ENCODE measurements at regions of chr2 and their contacts with region 1.

Region 1: DNA sequence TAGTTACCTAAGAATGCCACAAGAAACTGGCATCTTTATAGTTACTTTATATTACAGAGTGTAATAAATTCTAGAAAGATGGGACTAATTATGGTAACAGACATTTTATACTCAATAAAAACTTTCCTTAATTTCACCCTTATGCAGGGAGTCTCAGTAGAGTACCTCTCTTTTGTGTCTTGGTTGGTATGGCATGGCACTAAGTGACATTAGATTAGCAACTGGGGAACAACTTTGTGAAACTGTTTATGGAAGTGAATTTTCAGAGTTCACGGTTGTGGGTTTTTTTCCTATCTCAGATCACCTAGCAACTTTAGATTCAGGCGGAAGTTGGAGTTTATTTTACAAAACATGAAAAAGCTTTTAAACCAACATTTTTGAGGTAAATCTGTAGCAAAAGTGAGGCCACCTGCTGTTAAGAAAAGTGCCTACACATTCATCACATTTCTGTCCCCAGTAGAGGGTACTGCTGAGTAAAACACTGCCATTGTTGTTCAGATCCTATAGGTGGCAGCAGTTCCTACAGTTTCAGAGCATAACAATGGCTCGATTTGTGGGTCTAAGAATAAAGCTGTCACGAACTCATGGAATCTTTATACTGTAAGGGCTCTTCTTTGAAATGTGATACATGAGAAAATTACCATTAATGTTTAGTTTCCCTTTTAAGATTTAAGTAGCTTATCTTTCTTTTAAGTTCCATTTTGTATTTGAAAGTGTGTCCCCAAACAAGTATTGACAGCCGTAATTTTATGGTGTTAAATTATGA is 117.6 kb downstream of the CAMKMT start:
- DNase-seq: peak; percentile 61
- H3K4me3 ChIP-seq: no peak overlapping the region
- CTCF ChIP-seq: peak; percentile 98

Region 2: DNA sequence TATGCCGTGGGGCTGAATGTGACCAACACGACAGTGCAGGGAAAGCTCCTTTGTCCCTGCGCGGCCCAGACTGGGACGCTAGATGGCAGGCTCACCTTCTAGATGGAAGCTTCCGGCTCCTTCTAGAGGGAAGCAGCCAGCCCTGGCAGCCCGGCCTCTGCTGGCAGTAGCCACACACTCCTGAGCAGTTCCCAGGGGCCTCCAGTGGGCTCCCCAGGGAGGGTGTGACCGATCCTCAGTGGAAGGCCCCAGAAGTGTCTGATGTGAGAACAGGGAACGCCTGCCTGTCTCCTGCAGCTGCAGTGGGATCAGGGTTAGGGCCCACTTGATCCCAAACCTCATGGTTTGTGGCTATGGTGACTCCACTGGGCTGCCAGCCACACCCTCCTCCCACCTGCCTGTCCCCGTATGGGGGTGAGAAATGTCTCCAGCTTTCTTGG is 435.0 kb before region 1 on chr2:
- CTCF ChIA-PET with region 1: interaction called, 82 read pairs
- POLR2A ChIA-PET with region 1: no interaction called
- DNase-seq: peak; percentile 12
- H3K4me3 ChIP-seq: no peak overlapping the region
- CTCF ChIP-seq: peak; percentile 93

Region 3: GRCh38 chr2:44456946-44457345 is 22.4 kb before region 1 on chr2:
- CTCF ChIA-PET with region 1: interaction called, 14 read pairs
- POLR2A ChIA-PET with region 1: no interaction called
- DNase-seq: no peak
- H3K4me3 ChIP-seq: no peak overlapping the region
- CTCF ChIP-seq: no peak

Region 4: DNA sequence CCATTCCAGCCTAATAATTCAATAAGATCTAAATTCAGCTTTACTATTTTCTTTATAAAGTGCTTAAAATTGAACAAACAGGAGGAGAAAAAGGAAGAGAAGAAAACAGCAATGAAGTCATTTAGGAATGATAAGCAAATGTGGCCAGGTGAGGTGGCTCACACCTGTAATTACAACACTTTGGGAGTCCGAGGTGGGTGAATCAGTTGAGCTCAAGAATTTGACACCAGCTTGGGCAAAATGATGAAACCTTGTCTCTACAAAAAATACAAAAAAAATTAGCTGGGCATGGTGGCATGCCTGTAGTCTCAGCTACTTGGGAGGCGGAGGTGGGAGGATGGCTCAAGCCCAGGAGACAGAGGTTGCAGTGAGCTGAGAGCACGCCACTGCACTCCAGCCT is 11.4 kb after region 1 on chr2:
- CTCF ChIA-PET with region 1: interaction called, 75 read pairs
- POLR2A ChIA-PET with region 1: no interaction called
- DNase-seq: no peak
- H3K4me3 ChIP-seq: no peak overlapping the region
- CTCF ChIP-seq: no peak

Region 5: GRCh38 chr2:44515416-44515815 is 36.1 kb after region 1 on chr2:
- CTCF ChIA-PET with region 1: interaction called, 11 read pairs
- POLR2A ChIA-PET with region 1: no interaction called
- DNase-seq: no peak
- H3K4me3 ChIP-seq: no peak overlapping the region
- CTCF ChIP-seq: no peak

Region 6: DNA sequence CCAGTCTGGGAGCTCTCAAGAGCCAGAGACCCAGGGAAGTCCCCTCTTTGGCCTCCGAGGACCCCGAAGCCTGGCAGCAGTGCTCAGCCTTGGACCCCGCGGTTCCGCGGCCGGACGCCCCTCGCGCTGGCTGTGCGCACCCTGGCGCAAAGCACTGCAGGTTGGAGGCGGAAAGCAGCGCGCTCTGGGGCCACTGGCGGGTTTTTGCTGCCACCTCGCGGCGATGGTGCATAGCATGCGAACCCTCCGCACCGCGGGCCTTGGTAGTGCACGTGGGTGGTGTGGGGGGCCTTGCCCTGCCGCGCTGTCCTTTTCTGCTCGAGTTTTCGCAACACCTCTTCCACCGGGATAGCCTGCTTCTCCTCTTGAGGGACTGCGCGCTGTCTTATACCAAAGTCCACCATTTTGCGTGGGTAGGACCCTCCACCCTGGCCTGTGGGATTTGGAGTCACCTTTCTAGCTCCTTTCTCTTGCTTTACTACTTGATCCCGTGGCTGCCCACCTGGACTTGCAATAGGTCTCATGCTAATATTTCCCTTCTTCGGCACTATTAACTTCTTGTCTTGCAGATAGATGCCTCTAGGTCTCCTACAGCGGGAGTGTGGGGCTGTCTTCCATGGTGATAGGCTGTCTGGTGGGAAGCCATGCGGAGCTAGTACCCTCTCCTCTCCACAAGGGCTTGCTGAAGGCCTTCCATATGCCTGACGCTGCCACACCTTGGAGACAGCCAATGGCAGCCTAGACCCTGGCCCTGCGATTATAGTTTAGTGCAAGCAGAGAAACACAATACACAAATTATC is 476.5 kb after region 1 on chr2:
- CTCF ChIA-PET with region 1: interaction called, 155 read pairs
- POLR2A ChIA-PET with region 1: no interaction called
- DNase-seq: no peak
- H3K4me3 ChIP-seq: no peak overlapping the region; the same call in 1 of the 2 replicates
- CTCF ChIP-seq: peak; percentile 93